Naive thymus-derived CD4-positive, alpha-beta T cell (primary cell): ENCODE measurements at regions of chr13 and their contacts with region 1.

Region 1: DNA sequence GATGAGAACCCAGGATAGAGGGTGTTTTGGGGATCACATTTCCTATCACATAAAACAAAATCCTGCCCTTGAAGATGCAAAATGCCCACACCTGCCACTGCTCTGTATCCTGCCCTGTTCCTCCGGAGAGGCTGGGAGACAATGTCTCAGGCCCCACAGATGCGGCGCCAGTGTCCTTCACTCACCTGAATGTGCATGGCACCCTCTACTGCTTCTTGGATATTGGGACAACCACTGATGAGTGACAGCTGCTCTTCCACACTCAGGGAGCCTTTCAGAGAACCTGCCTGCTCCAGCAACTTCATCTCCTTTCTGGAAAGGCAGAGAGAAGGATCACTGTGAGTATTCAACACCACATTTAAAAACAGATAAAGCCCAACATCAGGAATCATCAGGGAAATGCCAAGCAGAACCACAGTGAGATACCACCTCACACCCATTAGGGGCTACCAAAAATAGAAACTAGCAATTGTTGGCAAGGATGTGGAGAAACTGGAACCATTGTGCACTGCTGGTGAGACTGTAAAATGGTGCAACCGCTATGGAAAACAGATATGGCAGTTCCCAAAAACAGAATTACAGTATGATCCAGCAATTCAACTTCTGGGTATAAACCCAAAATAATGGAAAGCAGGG is 36.4 kb downstream of the CRYL1 start:
- DNase-seq: peak in 4 of 9 donors; percentile 24 to 61 (median 46)
- ATAC-seq: peak; percentile 85
- H3K4me3 ChIP-seq: no peak overlapping the region
- H3K4me3 Mint-ChIP-seq: no peak overlapping the region
- H3K27ac ChIP-seq: no peak overlapping the region
- H3K27ac Mint-ChIP-seq: peak overlapping the region in 2 of 9 donors; percentile 51 to 75
- H3K4me1 ChIP-seq: no peaks in the 10 kb centered on the region
- H3K4me1 Mint-ChIP-seq: peaks cover 5 to 17% (median 12%) of the 10 kb centered on the region in 7 donors
- H3K27me3 ChIP-seq: no peaks in the 10 kb centered on the region
- H3K27me3 Mint-ChIP-seq: no peaks in the 10 kb centered on the region

Region 2: GRCh38 chr13:20182231-20182846 is 307.0 kb before region 1 on chr13:
- CTCF ChIA-PET with region 1: no interaction called
- POLR2A ChIA-PET with region 1: interaction called, 3 read pairs
- intact Hi-C with region 1: loop called in 1 of 2 experiments (anchors 1 kb)
- DNase-seq: peak in 7 of 9 donors; percentile 43 to 77 (median 67)
- ATAC-seq: peak; percentile 99
- H3K4me3 ChIP-seq: no peak overlapping the region
- H3K4me3 Mint-ChIP-seq: no peak overlapping the region
- H3K27ac ChIP-seq: no peak overlapping the region
- H3K27ac Mint-ChIP-seq: no peak overlapping the region
- H3K4me1 ChIP-seq: no peaks in the 10 kb centered on the region
- H3K4me1 Mint-ChIP-seq: no peaks in the 10 kb centered on the region
- H3K27me3 ChIP-seq: peaks cover 0 to 10% of the 10 kb centered on the region in 2 donors
- H3K27me3 Mint-ChIP-seq: peaks cover 37 to 48% (median 43%) of the 10 kb centered on the region in 5 donors